ENCODE measurements at regions of chr15 and their contacts with region 1.

Region 1: GRCh38 chr15:74787251-74788041 is 5.6 kb downstream of the CSK start:
- DNase-seq: peak; percentile 91
- H3K4me3 Mint-ChIP-seq: peak overlapping the region; percentile 92
- H3K27ac Mint-ChIP-seq: peak overlapping the region; percentile 97
- H3K4me1 Mint-ChIP-seq: peaks cover 65% of the 10 kb centered on the region
- H3K27me3 Mint-ChIP-seq: no peaks in the 10 kb centered on the region

Region 2: DNA sequence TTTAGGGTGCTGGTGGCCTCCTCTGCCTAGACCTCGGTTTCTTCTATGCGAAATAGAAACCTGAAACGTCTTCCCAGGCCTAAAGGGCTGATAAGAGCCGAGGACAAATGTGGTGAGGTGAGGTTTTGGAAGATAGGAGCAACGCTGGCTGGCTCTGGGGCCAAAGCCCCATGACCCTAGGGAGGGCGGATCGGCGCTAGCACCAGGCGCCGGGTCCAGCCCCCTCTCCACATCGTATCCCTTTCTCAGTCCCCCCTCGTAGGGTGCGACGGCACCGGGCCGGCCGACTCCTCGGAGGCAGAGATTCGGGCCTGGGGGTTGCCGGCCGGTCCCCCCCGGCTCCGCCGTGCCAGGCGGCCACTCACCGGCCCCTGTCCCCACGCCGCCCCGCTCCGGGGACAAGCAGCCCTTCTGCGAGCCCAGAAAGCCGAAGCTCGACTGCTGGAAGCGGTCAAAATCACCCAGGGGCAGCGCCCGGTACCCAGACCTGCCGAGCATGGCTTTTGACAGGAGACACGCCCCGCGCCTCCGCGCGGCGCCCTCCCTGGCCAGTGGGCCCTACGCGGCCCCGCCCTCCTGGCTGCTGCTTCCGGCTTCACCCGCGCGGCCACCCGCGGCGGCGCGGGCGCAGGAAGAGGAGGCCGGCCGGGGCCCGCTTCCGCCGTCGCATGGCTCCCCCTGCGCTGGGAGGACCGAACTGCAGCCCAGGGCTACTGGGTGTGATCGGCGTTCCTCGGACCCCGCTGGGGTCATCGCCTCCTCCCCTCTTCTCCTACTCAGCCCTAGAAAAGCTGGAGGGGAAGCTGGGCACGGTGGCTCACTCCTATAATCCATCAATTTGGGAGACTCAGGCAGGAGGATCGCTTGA is 795.5 kb before region 1 on chr15 and contains the start of gene STOML1:
- intact Hi-C with region 1: loop called (anchors 10 kb)
- DNase-seq: peak; percentile 93
- H3K4me3 Mint-ChIP-seq: peak within 1 kb of the TSS; percentile 81
- H3K27ac Mint-ChIP-seq: peak within 1 kb of the TSS; percentile 85
- H3K4me1 Mint-ChIP-seq: peaks cover 35% of the 10 kb centered on the region
- H3K27me3 Mint-ChIP-seq: no peaks in the 10 kb centered on the region
- total RNA-seq, gene STOML1: 8.6 and 9.2 TPM in 2 replicates

Region 3: GRCh38 chr15:74937596-74938296 is 150.3 kb after region 1 on chr15 and contains the start of gene COX5A:
- intact Hi-C with region 1: loop called (anchors 5 kb)
- DNase-seq: peak; percentile 92
- H3K4me3 Mint-ChIP-seq: peak within 1 kb of the TSS; percentile 85
- H3K27ac Mint-ChIP-seq: peak within 1 kb of the TSS; percentile 90
- H3K4me1 Mint-ChIP-seq: peaks cover 20% of the 10 kb centered on the region
- H3K27me3 Mint-ChIP-seq: no peaks in the 10 kb centered on the region
- total RNA-seq, gene COX5A: 311 and 333 TPM in 2 replicates

Region 4: GRCh38 chr15:74956648-74957300 is 169.3 kb after region 1 on chr15 and contains the start of gene RPP25:
- intact Hi-C with region 1: loop called (anchors 5 kb)
- DNase-seq: peak; percentile 67
- H3K4me3 Mint-ChIP-seq: peak within 1 kb of the TSS; percentile 64
- H3K27ac Mint-ChIP-seq: no peak within 1 kb of the TSS
- H3K4me1 Mint-ChIP-seq: peaks cover 32% of the 10 kb centered on the region
- H3K27me3 Mint-ChIP-seq: peaks cover 39% of the 10 kb centered on the region
- total RNA-seq, gene RPP25: 13.1 and 14.2 TPM in 2 replicates

Region 5: GRCh38 chr15:75625542-75626347 is 838.3 kb after region 1 on chr15 and contains the start of gene SNUPN:
- intact Hi-C with region 1: loop called (anchors 10 kb)
- DNase-seq: peak; percentile 88
- H3K4me3 Mint-ChIP-seq: peak within 1 kb of the TSS; percentile 92
- H3K27ac Mint-ChIP-seq: peak within 1 kb of the TSS; percentile 97
- H3K4me1 Mint-ChIP-seq: peaks cover 33% of the 10 kb centered on the region
- H3K27me3 Mint-ChIP-seq: no peaks in the 10 kb centered on the region
- total RNA-seq, gene SNUPN: 32.7 and 40.9 TPM in 2 replicates

Measured in activated T-helper 2 cell treated with anti-CD3 and anti-CD28 coated beads, Interferon-gamma antibody, Interleukin-2, Interleukin-4, amounts not matched to agents 10 μg/mL and 5 μg/mL and 100 μg/mL, durations not matched to agents 14 hours and 24 hours and 36 hours (primary cell).